ENCODE measurements at regions of chr2 and their contacts with region 1.

Region 1: GRCh38 chr2:108448678-108449493 is at the start of gene GCC2:
- DNase-seq: peak; percentile 95 to 99 (median 97)
- H3K4me3 ChIP-seq: peak within 1 kb of the TSS; percentile 63 to 98 (median 92)
- H3K27ac ChIP-seq: peak within 1 kb of the TSS; percentile 81 to 98 (median 92)
- H3K4me1 ChIP-seq: peaks cover 7 to 12% of the 10 kb centered on the region in 2 donors
- H3K27me3 ChIP-seq: no peaks in the 10 kb centered on the region
- CTCF ChIP-seq: no peak
- POLR2A ChIP-seq: peak; percentile 78 to 96
- total RNA-seq, gene GCC2: 16.4 to 48.0 (median 38.9) TPM

Region 2: DNA sequence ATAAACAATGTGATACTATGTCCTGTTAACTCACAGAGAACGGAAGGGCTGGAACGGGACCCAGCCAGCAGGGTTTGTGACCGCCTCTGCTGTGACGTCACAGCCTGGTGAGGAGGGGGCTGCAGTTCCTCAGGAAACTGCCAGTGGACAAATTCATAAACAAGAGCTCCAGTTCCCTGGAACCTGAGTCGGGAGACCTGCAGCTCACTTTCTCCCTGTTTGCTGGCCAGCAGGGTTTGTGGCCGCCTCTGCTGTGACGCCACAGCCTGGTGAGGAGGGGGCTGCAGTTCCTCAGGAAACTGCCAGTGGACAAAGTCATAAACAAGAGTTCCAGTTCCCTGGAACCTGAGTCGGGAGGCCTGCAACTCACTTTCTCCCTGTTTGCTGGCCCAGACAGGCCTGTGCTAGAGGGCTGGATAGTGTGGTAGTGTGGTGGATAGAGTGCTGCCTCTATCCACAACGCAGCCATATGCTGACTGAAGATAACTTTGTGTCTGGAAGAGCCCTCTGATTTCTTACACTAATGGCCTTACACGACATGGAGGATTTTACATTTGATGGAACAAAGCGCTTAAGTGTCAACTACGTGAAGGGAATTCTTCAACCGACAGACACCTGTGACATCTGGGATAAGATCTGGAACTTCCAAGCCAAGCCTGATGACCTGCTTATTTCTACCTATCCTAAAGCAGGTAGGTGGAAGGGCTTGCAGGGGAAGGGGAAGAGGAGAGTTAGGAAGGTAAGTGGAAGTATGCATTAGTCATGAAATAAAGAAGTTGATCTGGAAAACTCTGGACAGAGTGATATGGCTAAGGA is 70.9 kb before region 1 on chr2 and contains the start of gene SULT1C4:
- intact Hi-C with region 1: loop called in 1 of 2 experiments (anchors 10 kb)
- DNase-seq: peak in 6 of 7 donors; percentile 23 to 59 (median 31)
- H3K4me3 ChIP-seq: peak within 1 kb of the TSS in 1 of 4 donors; percentile 40
- H3K27ac ChIP-seq: peak within 1 kb of the TSS in 3 of 5 donors; percentile 26 to 53 (median 42)
- H3K4me1 ChIP-seq: no peaks in the 10 kb centered on the region
- H3K27me3 ChIP-seq: no peaks in the 10 kb centered on the region
- CTCF ChIP-seq: no peak
- POLR2A ChIP-seq: no peak
- total RNA-seq, gene SULT1C4: 0.86 to 14.4 (median 2.4) TPM

Region 3: DNA sequence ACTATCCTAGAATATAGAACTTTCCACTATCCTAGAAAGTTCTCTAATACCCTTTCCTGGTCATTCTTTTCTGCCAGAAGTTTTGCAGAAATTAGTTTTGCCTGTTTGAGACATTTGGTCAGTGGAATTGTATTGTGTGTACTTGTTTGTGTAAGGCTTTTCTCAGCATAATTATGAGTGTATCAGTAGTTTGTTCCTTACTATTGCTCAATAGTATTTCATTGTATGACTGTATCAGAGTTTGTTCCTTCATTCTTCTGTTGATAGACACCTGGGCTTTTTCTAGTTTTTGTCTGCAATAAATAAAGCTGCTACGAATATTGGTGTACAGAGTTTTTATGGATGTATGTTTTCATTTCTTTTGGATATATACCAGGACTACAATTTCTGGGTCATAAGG is 364.8 kb after region 1 on chr2:
- intact Hi-C with region 1: no loop called
- DNase-seq: no peak
- H3K4me3 ChIP-seq: no peak overlapping the region
- H3K27ac ChIP-seq: no peak overlapping the region
- H3K4me1 ChIP-seq: no peaks in the 10 kb centered on the region
- H3K27me3 ChIP-seq: no peaks in the 10 kb centered on the region
- CTCF ChIP-seq: no peak
- POLR2A ChIP-seq: no peak